Esophagus muscularis mucosa (tissue), 4 donors: ENCODE measurements at regions of chr17 and their contacts with region 1.

Region 1: GRCh38 chr17:6843241-6843880 is 11.8 kb upstream of the TEKT1 start:
- DNase-seq: no peak
- H3K4me3 ChIP-seq: no peak overlapping the region
- H3K27ac ChIP-seq: no peak overlapping the region
- H3K4me1 ChIP-seq: no peaks in the 10 kb centered on the region
- H3K27me3 ChIP-seq: peaks cover 0 to 25% (median 0%) of the 10 kb centered on the region in 4 donors
- CTCF ChIP-seq: peak; percentile 48 to 64 (median 50)
- EP300 ChIP-seq: no peak
- POLR2A ChIP-seq: no peak

Region 2: GRCh38 chr17:6666077-6666521 is 177.3 kb before region 1 on chr17:
- intact Hi-C with region 1: loop called (anchors 2 kb)
- DNase-seq: no peak
- H3K4me3 ChIP-seq: no peak overlapping the region
- H3K27ac ChIP-seq: no peak overlapping the region
- H3K4me1 ChIP-seq: peaks cover 0 to 3% (median 0%) of the 10 kb centered on the region in 4 donors
- H3K27me3 ChIP-seq: peaks cover 0 to 48% (median 0%) of the 10 kb centered on the region in 4 donors
- CTCF ChIP-seq: peak; percentile 82 to 92 (median 88)
- EP300 ChIP-seq: no peak
- POLR2A ChIP-seq: no peak

Region 3: GRCh38 chr17:7004398-7005253 is 161.3 kb after region 1 on chr17:
- intact Hi-C with region 1: loop called (anchors 10 kb)
- DNase-seq: no peak
- H3K4me3 ChIP-seq: no peak overlapping the region
- H3K27ac ChIP-seq: no peak overlapping the region
- H3K4me1 ChIP-seq: peaks cover 0 to 21% (median 6%) of the 10 kb centered on the region in 4 donors
- H3K27me3 ChIP-seq: no peaks in the 10 kb centered on the region
- CTCF ChIP-seq: peak; percentile 64 to 77 (median 67)
- EP300 ChIP-seq: no peak
- POLR2A ChIP-seq: no peak